Ascending aorta (tissue), 2 donors: ENCODE measurements at regions of chr6 and their contacts with region 1.

Region 1: GRCh38 chr6:10510592-10511367 is 10.4 kb upstream of the GCNT2 start:
- DNase-seq: peak in 1 of 2 donors; percentile 75
- H3K4me3 ChIP-seq: peak overlapping the region in 1 of 2 donors; percentile 48
- H3K27ac ChIP-seq: peak overlapping the region; percentile 47 to 62
- H3K4me1 ChIP-seq: peaks cover 0 to 5% of the 10 kb centered on the region in 2 donors
- H3K27me3 ChIP-seq: no peaks in the 10 kb centered on the region
- CTCF ChIP-seq: peak; percentile 47 to 80 (median 71)

Region 2: GRCh38 chr6:10555625-10556309 is 45.0 kb after region 1 on chr6:
- intact Hi-C with region 1: loop called (anchors 5 kb)
- DNase-seq: peak in 1 of 2 donors; percentile 84
- H3K4me3 ChIP-seq: peak overlapping the region; percentile 44 to 59
- H3K27ac ChIP-seq: peak overlapping the region; percentile 63 to 70
- H3K4me1 ChIP-seq: peaks cover 0 to 32% of the 10 kb centered on the region in 2 donors
- H3K27me3 ChIP-seq: no peaks in the 10 kb centered on the region
- CTCF ChIP-seq: no peak

Region 3: GRCh38 chr6:10722820-10723566 is 212.2 kb after region 1 on chr6 and contains the start of gene TMEM14C:
- intact Hi-C with region 1: loop called (anchors 1 kb)
- DNase-seq: peak; percentile 95 to 100
- H3K4me3 ChIP-seq: peak within 1 kb of the TSS; percentile 66 to 91
- H3K27ac ChIP-seq: peak within 1 kb of the TSS; percentile 82 to 92
- H3K4me1 ChIP-seq: peaks cover 7 to 20% of the 10 kb centered on the region in 2 donors
- H3K27me3 ChIP-seq: no peaks in the 10 kb centered on the region
- CTCF ChIP-seq: no peak
- total RNA-seq, gene TMEM14C: 79.6 TPM